ENCODE measurements at regions of chr1 and their contacts with region 1.

Region 1: DNA sequence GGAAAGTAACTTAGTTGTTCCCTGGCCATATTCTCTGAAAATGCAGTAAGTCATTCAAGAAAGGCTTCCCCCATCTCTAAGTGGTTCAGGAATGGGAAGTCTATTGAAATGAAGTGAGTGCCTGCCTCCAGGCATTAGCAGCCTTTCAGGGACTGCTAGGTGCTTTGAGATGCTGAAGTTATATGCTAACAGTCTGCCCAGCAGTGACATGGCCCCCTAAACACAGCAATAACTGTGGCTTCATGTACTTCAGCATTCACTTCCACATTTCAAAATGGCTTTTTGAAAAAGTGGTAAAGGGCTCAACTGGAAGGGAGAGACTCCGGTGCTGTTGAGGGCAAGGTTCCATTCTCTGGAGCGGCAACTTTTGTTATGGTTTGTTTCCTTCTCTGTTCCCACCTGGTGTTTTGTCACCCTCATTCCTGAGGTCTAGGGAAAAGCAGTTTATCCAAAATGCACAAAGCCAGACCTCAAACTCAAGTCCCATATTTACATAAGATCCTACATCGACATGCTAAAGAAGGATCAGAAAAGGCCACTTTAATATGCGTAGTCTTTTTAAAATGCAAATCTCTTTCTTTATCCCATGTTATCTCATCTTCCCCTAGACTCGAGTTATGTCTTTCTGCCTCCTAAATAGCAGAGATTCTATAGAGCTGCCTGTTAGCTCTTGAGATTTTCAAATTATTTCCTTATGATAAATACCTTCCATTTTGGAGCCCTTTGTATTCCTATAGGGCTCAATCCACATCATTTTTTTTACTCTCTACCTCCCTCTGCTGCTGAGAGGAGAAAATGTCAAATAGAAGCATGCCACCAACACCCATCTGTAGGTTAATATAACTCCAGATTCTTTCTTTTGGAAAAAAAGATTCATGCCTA is 34.2 kb upstream of the LRRC8C start:
- DNase-seq: peak in 5 of 9 donors; percentile 19 to 43 (median 35)
- ATAC-seq: peak; percentile 82
- H3K4me3 ChIP-seq: no peak overlapping the region
- H3K4me3 Mint-ChIP-seq: peak overlapping the region in 8 of 10 donors; percentile 1 to 67 (median 48)
- H3K27ac ChIP-seq: no peak overlapping the region
- H3K27ac Mint-ChIP-seq: peak overlapping the region; percentile 51 to 99 (median 79)
- H3K4me1 ChIP-seq: peaks cover 17 to 55% of the 10 kb centered on the region in 2 donors
- H3K4me1 Mint-ChIP-seq: peaks cover 42 to 98% (median 92%) of the 10 kb centered on the region in 7 donors
- H3K27me3 ChIP-seq: no peaks in the 10 kb centered on the region
- H3K27me3 Mint-ChIP-seq: no peaks in the 10 kb centered on the region

Region 2: DNA sequence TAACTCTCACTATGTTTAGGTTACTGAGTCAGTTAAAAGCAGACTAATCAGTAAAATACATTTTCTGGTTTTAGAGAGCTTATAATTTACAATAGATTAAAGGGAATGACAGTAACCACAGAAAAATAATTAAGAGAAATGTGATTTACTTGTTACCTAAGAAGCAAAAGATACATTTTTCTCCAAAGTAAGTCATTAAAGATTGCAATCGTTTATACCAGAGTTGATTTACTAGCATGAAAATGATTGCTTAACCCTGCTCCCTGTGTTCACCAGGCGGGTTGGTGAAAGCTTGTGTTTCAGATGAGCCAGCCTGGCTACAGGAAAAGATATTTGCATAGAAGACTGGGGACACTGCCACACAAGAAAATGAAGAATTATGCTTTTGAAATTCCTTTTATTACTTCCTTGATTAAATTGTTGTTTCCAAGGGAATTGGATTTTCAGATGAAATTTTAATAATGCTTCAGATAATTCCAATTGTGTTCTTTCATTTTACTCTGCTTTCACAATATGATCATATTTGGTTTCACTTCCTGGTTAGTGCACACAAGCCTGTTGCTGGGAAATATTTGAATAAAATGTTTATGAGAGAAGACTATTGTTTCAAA is 46.1 kb before region 1 on chr1:
- CTCF ChIA-PET with region 1: interaction called, 3 read pairs
- POLR2A ChIA-PET with region 1: no interaction called
- intact Hi-C with region 1: loop called in 1 of 2 experiments (anchors 5 kb)
- DNase-seq: peak in 3 of 9 donors; percentile 4 to 13 (median 12)
- ATAC-seq: peak; percentile 54
- H3K4me3 ChIP-seq: peak overlapping the region; percentile 40
- H3K4me3 Mint-ChIP-seq: peak overlapping the region in 9 of 10 donors; percentile 18 to 78 (median 56)
- H3K27ac ChIP-seq: no peak overlapping the region
- H3K27ac Mint-ChIP-seq: peak overlapping the region; percentile 7 to 77 (median 62)
- H3K4me1 ChIP-seq: peaks cover 0 to 12% of the 10 kb centered on the region in 2 donors
- H3K4me1 Mint-ChIP-seq: peaks cover 44 to 95% (median 76%) of the 10 kb centered on the region in 7 donors
- H3K27me3 ChIP-seq: no peaks in the 10 kb centered on the region
- H3K27me3 Mint-ChIP-seq: no peaks in the 10 kb centered on the region

Region 3: GRCh38 chr1:89581859-89582258 is 16.8 kb before region 1 on chr1:
- CTCF ChIA-PET with region 1: interaction called, 49 read pairs
- POLR2A ChIA-PET with region 1: interaction called, 488 read pairs
- intact Hi-C with region 1: loop called in 1 of 2 experiments (anchors 1 kb)
- DNase-seq: no peak
- ATAC-seq: no peak
- H3K4me3 ChIP-seq: no peak overlapping the region
- H3K4me3 Mint-ChIP-seq: no peak overlapping the region
- H3K27ac ChIP-seq: no peak overlapping the region
- H3K27ac Mint-ChIP-seq: peak overlapping the region in 4 of 9 donors; percentile 5 to 61 (median 48)
- H3K4me1 ChIP-seq: no peaks in the 10 kb centered on the region
- H3K4me1 Mint-ChIP-seq: peaks cover 6 to 42% (median 27%) of the 10 kb centered on the region in 7 donors
- H3K27me3 ChIP-seq: no peaks in the 10 kb centered on the region
- H3K27me3 Mint-ChIP-seq: no peaks in the 10 kb centered on the region

Region 4: GRCh38 chr1:89615676-89616598 is 17.2 kb after region 1 on chr1:
- CTCF ChIA-PET with region 1: interaction called, 62 read pairs
- POLR2A ChIA-PET with region 1: interaction called, 834 read pairs
- intact Hi-C with region 1: loop called in 1 of 2 experiments (anchors 2 kb)
- DNase-seq: no peak
- ATAC-seq: peak; percentile 54
- H3K4me3 ChIP-seq: no peak overlapping the region
- H3K4me3 Mint-ChIP-seq: peak overlapping the region in 2 of 10 donors; percentile 23 to 24
- H3K27ac ChIP-seq: no peak overlapping the region
- H3K27ac Mint-ChIP-seq: peak overlapping the region in 8 of 9 donors; percentile 15 to 86 (median 74)
- H3K4me1 ChIP-seq: peaks cover 30 to 42% of the 10 kb centered on the region in 2 donors
- H3K4me1 Mint-ChIP-seq: peaks cover 38 to 95% (median 84%) of the 10 kb centered on the region in 7 donors
- H3K27me3 ChIP-seq: no peaks in the 10 kb centered on the region
- H3K27me3 Mint-ChIP-seq: no peaks in the 10 kb centered on the region

Region 5: GRCh38 chr1:89622895-89623294 is 24.2 kb after region 1 on chr1:
- CTCF ChIA-PET with region 1: interaction called, 21 read pairs
- POLR2A ChIA-PET with region 1: interaction called, 834 read pairs
- intact Hi-C with region 1: loop called in 1 of 2 experiments (anchors 1 kb)
- DNase-seq: peak in 5 of 9 donors; percentile 29 to 58 (median 39)
- ATAC-seq: peak; percentile 71
- H3K4me3 ChIP-seq: no peak overlapping the region
- H3K4me3 Mint-ChIP-seq: peak overlapping the region in 3 of 10 donors; percentile 16 to 54 (median 31)
- H3K27ac ChIP-seq: no peak overlapping the region
- H3K27ac Mint-ChIP-seq: peak overlapping the region in 8 of 9 donors; percentile 35 to 98 (median 78)
- H3K4me1 ChIP-seq: peaks cover 9 to 22% of the 10 kb centered on the region in 2 donors
- H3K4me1 Mint-ChIP-seq: peaks cover 15 to 78% (median 61%) of the 10 kb centered on the region in 7 donors
- H3K27me3 ChIP-seq: no peaks in the 10 kb centered on the region
- H3K27me3 Mint-ChIP-seq: no peaks in the 10 kb centered on the region

Region 6: DNA sequence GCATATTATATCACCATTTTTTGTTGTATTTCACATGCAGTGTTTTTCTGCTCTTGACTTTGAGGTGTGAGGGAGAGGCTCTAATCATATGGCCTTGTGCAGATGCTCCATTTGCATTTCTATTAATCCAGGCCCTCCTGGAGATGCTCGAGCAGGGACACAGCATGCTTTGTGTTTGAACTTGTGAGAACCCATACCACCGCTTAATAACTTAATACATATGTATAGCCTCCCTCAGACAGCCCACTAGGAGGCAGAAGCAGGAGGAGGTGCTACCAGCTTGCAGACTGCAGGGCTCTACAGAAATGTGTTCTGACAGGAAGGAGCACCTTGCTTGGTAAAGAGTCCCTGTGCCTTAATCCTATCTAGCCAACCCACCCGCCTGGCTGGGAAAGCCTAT is 963.2 kb after region 1 on chr1:
- CTCF ChIA-PET with region 1: no interaction called
- POLR2A ChIA-PET with region 1: no interaction called
- intact Hi-C with region 1: no loop called
- DNase-seq: no peak
- ATAC-seq: no peak
- H3K4me3 ChIP-seq: no peak overlapping the region
- H3K4me3 Mint-ChIP-seq: no peak overlapping the region
- H3K27ac ChIP-seq: no peak overlapping the region
- H3K27ac Mint-ChIP-seq: no peak overlapping the region
- H3K4me1 ChIP-seq: no peaks in the 10 kb centered on the region
- H3K4me1 Mint-ChIP-seq: peaks cover 0 to 3% (median 0%) of the 10 kb centered on the region in 7 donors
- H3K27me3 ChIP-seq: peaks cover 0 to 4% of the 10 kb centered on the region in 2 donors
- H3K27me3 Mint-ChIP-seq: peaks cover 10 to 42% (median 32%) of the 10 kb centered on the region in 5 donors